Activated CD4-positive, alpha-beta T cell treated with anti-CD3 and anti-CD28 coated beads, Interleukin-2, amount 10 ng/mL, durations not matched to agents 7 days and 5 days (primary cell): ENCODE measurements at regions of chr6 and their contacts with region 1.

Region 1: GRCh38 chr6:169803271-169803811 is 51.9 kb downstream of the ERMARD start:
- DNase-seq: peak; percentile 37
- H3K4me3 Mint-ChIP-seq: no peak overlapping the region
- H3K27ac Mint-ChIP-seq: no peak overlapping the region
- H3K4me1 Mint-ChIP-seq: peaks cover 50% of the 10 kb centered on the region
- H3K27me3 Mint-ChIP-seq: peaks cover 57% of the 10 kb centered on the region

Region 2: GRCh38 chr6:169789982-169790927 is 13.1 kb before region 1 on chr6:
- CTCF ChIA-PET with region 1: interaction called, 38 read pairs
- POLR2A ChIA-PET with region 1: interaction called, 3 read pairs
- DNase-seq: peak; percentile 68
- H3K4me3 Mint-ChIP-seq: peak overlapping the region; percentile 68
- H3K27ac Mint-ChIP-seq: no peak overlapping the region
- H3K4me1 Mint-ChIP-seq: peaks cover 21% of the 10 kb centered on the region
- H3K27me3 Mint-ChIP-seq: peaks cover 43% of the 10 kb centered on the region